IMR-90 (cell line): ENCODE measurements at regions of chrX and their contacts with region 1.

Region 1: GRCh38 chrX:6910218-6910617 is 237.3 kb upstream of the STS start:
- DNase-seq: no peak
- ATAC-seq: no peak
- H3K4me3 ChIP-seq: no peak overlapping the region
- H3K27ac ChIP-seq: no peak overlapping the region
- H3K4me1 ChIP-seq: no peaks in the 10 kb centered on the region
- H3K27me3 ChIP-seq: no peaks in the 10 kb centered on the region
- CTCF ChIP-seq: no peak
- POLR2A ChIP-seq: no peak
- RAD21 ChIP-seq: no peak

Region 2: DNA sequence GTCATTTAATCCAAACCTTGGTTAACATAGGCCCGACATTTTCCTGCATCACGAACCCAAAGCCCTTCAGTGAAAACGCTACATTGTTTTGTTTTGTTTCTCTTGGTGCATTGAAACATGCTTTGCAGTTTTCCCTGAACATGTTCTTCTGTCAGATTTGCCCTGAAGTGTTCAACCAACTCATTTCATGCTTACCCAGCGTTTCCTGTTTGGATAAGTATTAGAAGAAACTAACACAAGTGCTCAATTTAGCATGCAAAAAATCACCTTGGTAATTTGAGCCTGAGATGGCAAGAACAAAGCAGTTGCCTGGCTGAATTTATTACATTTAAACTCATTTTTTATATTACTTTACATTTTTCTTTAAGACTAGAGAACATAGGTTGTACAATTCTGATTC is 215.2 kb before region 1 on chrX:
- CTCF ChIA-PET with region 1: no interaction called
- POLR2A ChIA-PET with region 1: no interaction called
- dilution Hi-C with region 1: no loop called
- in situ Hi-C with region 1: no loop called
- intact Hi-C with region 1: no loop called
- DNase-seq: no peak
- ATAC-seq: no peak
- H3K4me3 ChIP-seq: no peak overlapping the region
- H3K27ac ChIP-seq: no peak overlapping the region
- H3K4me1 ChIP-seq: no peaks in the 10 kb centered on the region
- H3K27me3 ChIP-seq: no peaks in the 10 kb centered on the region
- CTCF ChIP-seq: no peak
- POLR2A ChIP-seq: no peak
- RAD21 ChIP-seq: no peak

Region 3: DNA sequence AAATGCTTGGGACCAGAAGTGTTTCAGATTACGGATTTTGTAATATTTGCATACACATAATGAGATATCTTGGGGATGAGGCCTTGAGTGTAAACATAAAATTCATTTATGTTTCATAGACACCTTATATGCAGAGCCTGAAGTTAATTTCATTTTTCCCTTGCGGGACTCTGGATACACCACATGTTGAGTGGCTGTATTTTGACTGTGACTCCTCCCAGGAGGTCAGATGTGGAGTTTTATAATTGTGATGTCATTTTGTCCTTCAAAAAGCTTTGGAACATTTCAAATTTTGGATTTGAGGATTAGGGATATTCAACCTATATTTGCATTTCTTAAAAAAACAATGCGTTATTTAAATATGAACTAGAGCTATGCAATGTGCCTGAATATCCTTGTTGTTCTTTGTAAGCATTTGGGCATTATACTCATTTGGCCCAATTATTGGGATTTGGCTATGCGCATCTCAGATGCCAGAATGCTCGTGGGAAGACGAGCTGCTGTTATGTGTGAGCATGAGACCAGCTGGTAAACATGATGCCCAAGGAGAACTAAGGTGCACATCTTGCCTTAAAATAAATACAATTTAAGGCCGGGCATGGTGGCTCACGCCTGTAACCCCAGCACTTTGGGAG is 14.3 kb after region 1 on chrX:
- CTCF ChIA-PET with region 1: no interaction called
- POLR2A ChIA-PET with region 1: no interaction called
- dilution Hi-C with region 1: no loop called
- in situ Hi-C with region 1: no loop called
- intact Hi-C with region 1: no loop called
- DNase-seq: no peak
- ATAC-seq: no peak
- H3K4me3 ChIP-seq: no peak overlapping the region
- H3K27ac ChIP-seq: no peak overlapping the region
- H3K4me1 ChIP-seq: no peaks in the 10 kb centered on the region
- H3K27me3 ChIP-seq: no peaks in the 10 kb centered on the region
- CTCF ChIP-seq: no peak
- POLR2A ChIP-seq: no peak
- RAD21 ChIP-seq: no peak

Region 4: DNA sequence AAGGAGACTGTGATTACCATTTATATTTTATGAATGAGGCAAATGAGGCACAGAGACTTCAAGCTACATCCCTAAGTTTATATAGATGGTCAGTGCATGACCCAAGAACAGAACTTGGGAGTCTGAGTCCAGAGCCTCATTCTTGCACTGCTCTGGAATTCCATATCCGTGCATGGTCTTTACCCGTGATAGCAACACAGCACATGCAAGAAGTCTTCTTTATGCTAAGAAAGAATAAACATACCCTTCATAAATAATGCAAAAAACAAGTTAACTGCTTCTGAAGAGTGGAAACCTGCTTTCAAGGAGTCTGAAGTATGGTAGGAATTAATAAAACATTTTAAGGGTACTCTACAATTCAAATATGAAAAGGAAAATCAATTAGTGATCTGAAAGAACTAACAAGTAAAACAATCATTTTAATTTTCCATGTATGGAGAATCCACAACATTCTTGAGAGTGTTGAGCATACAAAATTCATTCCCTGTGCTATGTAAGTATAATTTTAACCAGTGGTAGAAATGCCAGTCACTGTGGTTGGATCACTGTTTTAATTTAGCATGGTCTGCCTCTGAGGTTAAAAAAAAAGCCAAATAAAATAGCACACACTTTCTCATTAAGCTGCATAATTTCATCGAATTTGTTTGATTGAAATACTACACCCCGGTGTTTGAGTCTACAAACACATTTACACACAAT is 51.6 kb after region 1 on chrX:
- CTCF ChIA-PET with region 1: no interaction called
- POLR2A ChIA-PET with region 1: no interaction called
- dilution Hi-C with region 1: no loop called
- in situ Hi-C with region 1: no loop called
- intact Hi-C with region 1: loop called (anchors 5 kb)
- DNase-seq: no peak
- ATAC-seq: no peak
- H3K4me3 ChIP-seq: no peak overlapping the region
- H3K27ac ChIP-seq: no peak overlapping the region
- H3K4me1 ChIP-seq: no peaks in the 10 kb centered on the region
- H3K27me3 ChIP-seq: no peaks in the 10 kb centered on the region
- CTCF ChIP-seq: no peak
- POLR2A ChIP-seq: no peak
- RAD21 ChIP-seq: no peak